GM13976 (cell line): ENCODE measurements at regions of chr5 and their contacts with region 1.

Region 1: DNA sequence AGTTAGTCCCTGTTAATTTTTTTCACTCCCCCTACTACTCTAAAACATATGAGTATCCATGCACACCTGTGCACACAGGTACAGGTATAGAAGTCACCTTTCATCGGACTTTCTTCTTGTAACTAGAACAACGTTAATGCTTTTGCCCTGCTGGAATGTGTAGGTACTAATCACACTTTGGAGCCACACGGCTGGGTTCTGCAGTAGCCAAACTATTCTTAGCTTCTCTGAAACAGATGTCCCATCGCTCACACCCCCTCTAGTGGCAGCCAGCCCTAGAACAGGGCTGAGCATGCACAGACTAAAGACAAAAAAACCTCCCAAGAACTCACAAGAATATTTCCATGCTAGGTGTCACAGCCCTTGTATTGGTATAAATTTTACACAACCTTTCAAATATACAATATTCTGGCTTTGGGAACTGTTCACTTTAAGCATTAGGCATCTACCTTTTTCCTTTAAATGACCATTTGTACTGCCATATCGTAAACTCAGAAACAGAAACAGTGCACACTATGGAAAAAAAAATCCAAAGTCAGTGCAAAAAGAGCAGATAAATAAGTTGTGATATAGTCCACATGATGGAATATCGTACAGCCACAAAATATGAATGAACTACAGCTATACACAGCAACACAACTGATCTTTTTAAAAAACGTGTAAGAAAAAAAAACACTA is 64.0 kb downstream of the RETREG1 start:
- DNase-seq: peak; percentile 42
- CTCF ChIP-seq: peak; percentile 62

Region 2: DNA sequence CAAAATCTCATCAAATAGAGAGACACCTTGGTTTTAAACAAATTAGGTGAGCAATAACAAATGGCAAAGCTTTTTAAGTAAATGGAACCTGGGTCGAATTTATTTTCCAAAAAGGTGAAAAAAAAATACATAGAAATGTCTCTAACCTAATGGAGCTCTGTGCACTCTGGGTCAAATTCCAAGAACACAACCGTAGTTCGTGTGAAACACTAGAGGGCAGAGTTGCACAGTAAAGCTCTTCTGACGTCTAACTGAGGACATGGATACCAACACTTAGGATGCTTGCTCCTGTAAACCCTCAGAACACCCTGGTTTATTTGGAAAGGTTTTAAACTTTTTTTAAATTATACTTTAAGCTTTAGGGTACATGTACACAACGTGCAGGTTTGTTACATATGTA is 392.1 kb before region 1 on chr5:
- in situ Hi-C with region 1: loop called (anchors 25 kb)
- DNase-seq: peak; percentile 26
- CTCF ChIP-seq: peak; percentile 75

Region 3: GRCh38 chr5:16465544-16466466 is 87.0 kb before region 1 on chr5 and contains the start of gene ZNF622:
- in situ Hi-C with region 1: loop called (anchors 5 kb)
- DNase-seq: peak; percentile 89
- CTCF ChIP-seq: no peak